ENCODE measurements at regions of chr7 and their contacts with region 1.

Region 1: DNA sequence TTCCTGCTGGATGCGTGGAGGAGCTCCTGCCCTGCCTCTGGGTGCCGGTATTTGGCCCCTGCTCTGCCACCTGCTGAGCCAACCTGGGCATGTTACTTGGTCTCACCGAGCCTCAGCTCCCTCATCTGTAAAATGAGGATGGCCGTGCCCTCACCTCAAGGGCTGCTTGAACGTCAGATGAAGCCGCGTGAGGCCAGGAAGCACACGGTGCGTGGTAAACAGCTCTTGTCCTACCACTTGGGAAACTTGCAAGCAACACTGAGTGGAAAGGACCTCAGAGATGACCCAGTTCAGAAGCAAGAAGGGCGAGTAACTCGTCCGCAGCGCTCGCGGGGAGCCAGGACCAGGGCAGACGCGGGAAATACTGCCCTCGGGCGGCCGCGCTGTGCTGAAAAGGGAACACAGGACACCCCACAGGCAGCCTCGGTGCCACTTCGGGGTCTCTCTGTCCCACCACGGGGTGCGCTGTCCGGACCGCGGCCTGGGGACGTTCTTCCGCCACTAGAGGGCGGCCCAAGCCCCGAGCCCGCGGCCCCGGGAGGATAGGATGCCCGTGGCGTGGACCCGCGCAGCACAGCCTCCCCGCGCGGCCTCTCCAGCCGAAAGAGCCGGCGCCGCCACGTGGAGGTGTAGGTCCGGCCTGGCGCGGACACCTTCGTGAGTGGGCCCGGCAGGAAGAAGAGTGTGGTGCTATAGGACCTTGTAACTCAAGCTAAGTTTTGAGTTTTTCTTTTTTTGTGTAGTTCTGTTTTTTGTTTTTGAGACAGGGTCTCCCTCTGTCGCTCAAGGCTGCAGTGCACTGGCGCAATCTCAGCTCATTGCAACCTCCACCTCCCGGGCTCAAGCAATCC is 94.1 kb downstream of the PRKAG2 start:
- DNase-seq: peak; percentile 70 to 90
- ATAC-seq: peak; percentile 94 to 98
- H3K4me3 ChIP-seq: peak overlapping the region; percentile 35
- H3K27ac ChIP-seq: peak overlapping the region; percentile 62 to 70
- H3K4me1 ChIP-seq: 0 out of 3 replicates have a peak, but pooled peaks cover 4% of the 10 kb centered on the region
- CTCF ChIP-seq: peak; percentile 99
- EP300 ChIP-seq: no peak
- POLR2A ChIP-seq: no peak
- RAD21 ChIP-seq: peak; percentile 72 to 92

Region 2: GRCh38 chr7:151769188-151769841 is 13.5 kb before region 1 on chr7:
- CTCF ChIA-PET with region 1: interaction called, 39 read pairs
- POLR2A ChIA-PET with region 1: no interaction called
- DNase-seq: no peak
- ATAC-seq: no peak
- H3K4me3 ChIP-seq: no peak overlapping the region
- H3K27ac ChIP-seq: no peak overlapping the region
- H3K4me1 ChIP-seq: no peaks in the 10 kb centered on the region
- CTCF ChIP-seq: no peak
- EP300 ChIP-seq: no peak
- POLR2A ChIP-seq: no peak
- RAD21 ChIP-seq: no peak

Region 3: DNA sequence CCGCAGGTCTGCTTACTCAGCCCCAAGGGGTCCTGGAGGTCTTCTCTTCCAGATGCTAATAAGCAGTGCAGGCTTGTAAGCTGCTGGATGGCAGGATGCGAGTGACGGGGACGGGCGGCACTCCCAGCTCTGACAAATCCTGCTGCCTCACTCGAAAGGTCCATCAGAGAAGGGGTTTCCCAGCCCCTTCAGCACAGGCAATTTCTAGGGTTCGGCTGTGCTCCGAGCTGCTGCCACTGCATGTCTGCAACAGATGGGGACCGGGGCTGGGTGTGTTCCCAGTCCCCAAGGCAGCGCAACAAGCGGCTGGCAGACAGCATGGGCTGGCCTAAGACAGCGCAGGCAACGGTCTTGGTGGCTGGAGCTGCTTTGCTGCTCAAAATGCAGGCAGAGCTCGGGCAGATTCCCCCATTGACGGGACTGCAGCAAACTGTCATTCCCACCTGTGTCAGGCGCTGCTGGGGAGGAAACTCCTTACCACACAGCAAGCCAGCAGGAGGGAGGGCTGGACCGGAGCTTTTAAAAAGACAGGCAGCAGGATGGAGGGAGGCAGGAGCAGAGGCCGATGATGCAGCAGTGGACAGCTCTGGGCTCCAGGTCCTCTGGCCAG is 31.7 kb after region 1 on chr7:
- CTCF ChIA-PET with region 1: interaction called, 64 read pairs
- POLR2A ChIA-PET with region 1: no interaction called
- DNase-seq: no peak
- ATAC-seq: peak in 1 of 2 experiments; percentile 42; a peak in 3 of 6 replicates
- H3K4me3 ChIP-seq: no peak overlapping the region
- H3K27ac ChIP-seq: no peak overlapping the region
- H3K4me1 ChIP-seq: peaks cover 8% of the 10 kb centered on the region; the same call in 2 of the 3 replicates
- CTCF ChIP-seq: no peak
- EP300 ChIP-seq: no peak
- POLR2A ChIP-seq: no peak
- RAD21 ChIP-seq: no peak

Region 4: DNA sequence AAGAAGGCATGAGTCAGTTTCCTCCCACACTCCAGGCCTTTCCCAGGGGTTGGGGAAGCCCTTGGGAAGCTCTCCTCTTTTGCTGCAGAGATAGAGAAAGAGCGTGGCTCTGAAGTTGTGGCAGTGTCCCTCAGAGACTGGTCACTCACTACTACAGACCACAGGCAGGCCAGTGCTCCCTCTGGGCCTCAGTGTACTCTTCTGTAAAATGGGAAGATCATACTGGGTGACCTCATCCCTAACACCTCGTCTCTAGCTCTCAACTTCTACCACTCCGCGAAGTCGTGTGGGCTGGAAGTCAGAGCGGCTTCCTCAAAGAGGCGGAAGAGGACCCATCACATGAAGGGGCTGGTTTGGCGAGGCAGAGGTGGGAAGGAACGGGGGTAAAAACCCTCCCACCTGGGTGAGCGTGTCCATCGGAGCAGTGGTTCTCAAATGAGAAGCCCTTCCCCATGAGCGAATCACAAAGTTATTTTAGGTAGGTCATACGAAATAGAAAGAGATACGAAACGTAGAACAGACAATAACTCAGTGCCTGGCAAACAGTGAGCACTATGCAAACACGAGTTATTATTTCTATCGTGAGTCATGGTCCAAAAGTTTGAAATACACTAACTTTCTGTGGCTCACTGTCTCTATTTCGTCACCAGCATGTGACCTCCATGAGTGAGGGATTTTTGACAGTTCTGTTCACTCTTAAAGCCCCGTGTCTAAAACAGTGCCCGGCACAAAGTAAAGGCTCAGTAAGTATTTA is 61.4 kb after region 1 on chr7:
- CTCF ChIA-PET with region 1: interaction called, 40 read pairs
- POLR2A ChIA-PET with region 1: no interaction called
- DNase-seq: peak; percentile 80 to 90
- ATAC-seq: peak; percentile 90 to 92
- H3K4me3 ChIP-seq: peak overlapping the region; percentile 15; the same call in 1 of the 3 replicates
- H3K27ac ChIP-seq: peak overlapping the region; percentile 61 to 75
- H3K4me1 ChIP-seq: peaks cover 21% of the 10 kb centered on the region
- CTCF ChIP-seq: no peak
- EP300 ChIP-seq: no peak
- POLR2A ChIP-seq: no peak
- RAD21 ChIP-seq: peak in 1 of 2 experiments; percentile 19; a peak in 1 of 5 replicates

Region 5: DNA sequence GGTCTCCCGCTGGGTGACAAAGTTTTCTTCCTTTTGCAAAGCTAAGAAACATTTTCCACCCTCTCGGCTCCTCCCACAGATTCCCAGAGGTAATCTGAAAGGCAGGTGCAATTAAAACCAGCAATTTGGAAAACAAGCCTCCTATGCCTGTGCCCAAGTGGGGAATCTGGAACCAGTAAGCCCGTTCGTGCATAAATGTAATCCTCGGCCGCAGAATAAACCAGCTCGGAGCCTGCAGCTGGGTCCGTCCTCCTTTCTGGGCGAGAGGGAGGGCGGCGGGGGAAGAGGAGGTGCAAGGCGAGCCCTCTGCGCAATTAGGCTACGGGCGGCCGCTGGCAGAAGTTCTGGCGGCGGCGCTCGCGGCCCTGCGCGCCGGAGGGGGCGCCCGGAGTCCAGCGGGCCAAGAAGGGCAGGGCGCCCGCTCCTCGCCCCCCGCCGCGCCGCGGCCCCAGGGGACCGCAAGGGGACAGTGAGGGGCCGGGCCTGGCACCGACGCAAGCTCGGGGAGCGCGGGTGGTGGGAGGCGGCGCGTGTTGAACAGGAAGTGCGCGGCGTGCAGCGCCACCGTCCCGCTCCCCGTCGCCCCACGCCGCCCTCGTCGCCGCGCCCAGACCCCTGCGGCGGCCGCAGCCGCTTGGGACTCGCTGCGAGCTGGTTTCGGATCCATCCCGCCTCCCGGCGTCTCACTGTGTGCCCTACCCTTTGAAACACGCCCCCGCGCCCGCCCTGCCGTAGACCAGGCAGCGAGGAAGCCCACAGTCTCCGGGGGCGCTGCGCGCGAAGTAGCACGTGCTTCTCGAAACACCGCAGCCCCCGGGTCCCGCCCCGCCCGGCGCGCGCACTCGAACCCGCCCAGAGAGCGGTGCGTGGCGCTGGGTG is 94.3 kb after region 1 on chr7 and contains the start of gene PRKAG2:
- CTCF ChIA-PET with region 1: interaction called, 30 read pairs
- POLR2A ChIA-PET with region 1: no interaction called
- DNase-seq: peak; percentile 46 to 55
- ATAC-seq: peak; percentile 56 to 57
- H3K4me3 ChIP-seq: peak within 1 kb of the TSS; percentile 64
- H3K27ac ChIP-seq: peak within 1 kb of the TSS; percentile 77 to 85
- H3K4me1 ChIP-seq: peaks cover 11% of the 10 kb centered on the region; the same call in 2 of the 3 replicates
- CTCF ChIP-seq: peak; percentile 30
- EP300 ChIP-seq: no peak
- POLR2A ChIP-seq: no peak
- RAD21 ChIP-seq: no peak
- polyA plus RNA-seq, gene PRKAG2: 23.0 and 31.7 TPM in 2 replicates

Region 6: GRCh38 chr7:151936207-151936606 is 153.4 kb after region 1 on chr7:
- CTCF ChIA-PET with region 1: interaction called, 50 read pairs
- POLR2A ChIA-PET with region 1: interaction called, 3 read pairs
- DNase-seq: no peak
- ATAC-seq: no peak
- H3K4me3 ChIP-seq: no peak overlapping the region
- H3K27ac ChIP-seq: no peak overlapping the region
- H3K4me1 ChIP-seq: peaks cover 22% of the 10 kb centered on the region
- CTCF ChIP-seq: no peak
- EP300 ChIP-seq: no peak
- POLR2A ChIP-seq: no peak
- RAD21 ChIP-seq: no peak

Region 7: GRCh38 chr7:152341039-152341913 is 558.5 kb after region 1 on chr7:
- CTCF ChIA-PET with region 1: no interaction called
- POLR2A ChIA-PET with region 1: no interaction called
- DNase-seq: peak; percentile 69 to 71
- ATAC-seq: peak; percentile 94 to 98
- H3K4me3 ChIP-seq: no peak overlapping the region
- H3K27ac ChIP-seq: no peak overlapping the region
- H3K4me1 ChIP-seq: peaks cover 7% of the 10 kb centered on the region; the same call in 2 of the 3 replicates
- CTCF ChIP-seq: peak; percentile 60
- EP300 ChIP-seq: no peak
- POLR2A ChIP-seq: no peak
- RAD21 ChIP-seq: peak; percentile 77 to 78